Calu3 (cell line): ENCODE measurements at regions of chr17 and their contacts with region 1.

Region 1: DNA sequence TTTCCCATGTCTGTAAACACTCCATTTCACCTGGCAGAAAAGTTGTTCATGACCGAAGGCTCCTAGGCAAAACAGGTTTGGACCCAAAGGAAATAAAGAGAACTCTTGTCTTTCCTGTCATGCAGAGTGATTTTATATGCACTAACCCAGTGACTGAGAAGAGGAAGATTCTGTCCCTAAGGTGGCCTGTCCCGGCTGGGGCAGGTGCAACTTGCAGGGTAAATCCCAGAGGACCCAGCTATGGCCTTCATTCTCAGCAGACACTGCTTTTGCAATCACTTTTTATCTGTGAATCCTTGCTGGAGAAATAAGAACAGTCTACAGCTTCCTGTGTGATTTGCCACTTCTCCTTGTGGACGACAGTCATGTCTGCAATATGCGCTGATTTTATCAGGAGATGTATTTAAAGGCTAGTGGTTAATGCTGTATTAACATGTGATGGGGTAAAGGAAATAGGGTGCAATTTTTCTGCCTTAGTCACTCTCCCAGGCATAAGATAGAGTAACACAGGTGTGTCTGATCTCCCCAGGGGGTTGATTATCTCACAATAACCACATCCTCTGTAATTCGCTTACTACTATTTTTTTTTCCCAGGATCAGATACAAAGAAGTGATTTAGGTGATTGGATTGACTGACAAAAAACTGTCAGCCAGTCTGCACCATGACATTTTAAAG is 696.8 kb upstream of the SOX9 start:
- DNase-seq: peak; percentile 67
- H3K4me3 Mint-ChIP-seq: peak overlapping the region; percentile 7
- H3K27ac Mint-ChIP-seq: peak overlapping the region; percentile 89
- H3K4me1 Mint-ChIP-seq: peaks cover 25% of the 10 kb centered on the region
- H3K27me3 Mint-ChIP-seq: no peaks in the 10 kb centered on the region
- CTCF ChIP-seq: peak; percentile 31

Region 2: DNA sequence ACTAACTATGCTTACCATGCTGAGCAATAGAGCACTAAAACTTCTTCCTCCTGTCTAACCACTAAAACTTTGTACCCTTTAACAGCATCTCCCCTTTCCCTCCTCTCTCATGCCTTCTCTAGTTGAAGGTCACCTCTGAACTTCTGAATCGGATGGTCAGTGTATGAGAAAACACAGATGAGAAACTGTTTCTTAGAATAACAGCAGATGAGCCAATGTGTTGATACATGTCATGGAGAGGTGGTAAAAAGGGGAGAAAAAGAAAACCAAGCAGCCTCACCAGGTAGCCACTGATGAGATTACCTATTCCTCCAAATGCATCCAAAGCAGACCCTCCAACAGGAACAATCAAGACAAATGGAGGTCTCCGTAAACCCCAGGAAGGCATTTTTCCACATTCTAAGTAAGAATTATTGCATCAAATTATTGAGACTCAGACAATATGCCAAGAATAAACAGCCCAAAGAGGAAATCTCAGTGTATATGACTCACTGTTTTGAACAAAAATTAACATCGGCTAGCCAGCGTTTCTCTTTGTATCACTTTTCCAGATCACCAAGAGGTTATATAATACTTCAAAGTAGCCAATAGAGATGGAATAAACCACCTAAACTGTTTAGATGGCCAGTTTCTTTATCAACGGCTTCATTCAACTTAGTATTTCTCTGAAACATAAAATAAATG is 96.5 kb before region 1 on chr17:
- CTCF ChIA-PET with region 1: no interaction called
- intact Hi-C with region 1: loop called (anchors 5 kb)
- DNase-seq: no peak
- H3K4me3 Mint-ChIP-seq: peak overlapping the region; percentile 13
- H3K27ac Mint-ChIP-seq: peak overlapping the region; percentile 81
- H3K4me1 Mint-ChIP-seq: peaks cover 39% of the 10 kb centered on the region
- H3K27me3 Mint-ChIP-seq: no peaks in the 10 kb centered on the region
- CTCF ChIP-seq: no peak

Region 3: GRCh38 chr17:71467719-71468118 is 43.7 kb after region 1 on chr17:
- CTCF ChIA-PET with region 1: no interaction called
- intact Hi-C with region 1: loop called (anchors 5 kb)
- DNase-seq: peak; percentile 52
- H3K4me3 Mint-ChIP-seq: peak overlapping the region; percentile 52
- H3K27ac Mint-ChIP-seq: peak overlapping the region; percentile 90
- H3K4me1 Mint-ChIP-seq: peaks cover 38% of the 10 kb centered on the region
- H3K27me3 Mint-ChIP-seq: no peaks in the 10 kb centered on the region
- CTCF ChIP-seq: no peak